Mammary epithelial cell (primary cell): ENCODE measurements at regions of chr9 and their contacts with region 1.

Region 1: GRCh38 chr9:15295761-15296405 is 11.1 kb downstream of the TTC39B start:
- DNase-seq: peak; percentile 56
- H3K4me3 ChIP-seq: peak overlapping the region; percentile 27 to 49 (median 42)
- H3K27ac ChIP-seq: peak overlapping the region; percentile 85
- H3K4me1 ChIP-seq: peaks cover 37% of the 10 kb centered on the region
- H3K27me3 ChIP-seq: no peaks in the 10 kb centered on the region
- CTCF ChIP-seq: no peak

Region 2: DNA sequence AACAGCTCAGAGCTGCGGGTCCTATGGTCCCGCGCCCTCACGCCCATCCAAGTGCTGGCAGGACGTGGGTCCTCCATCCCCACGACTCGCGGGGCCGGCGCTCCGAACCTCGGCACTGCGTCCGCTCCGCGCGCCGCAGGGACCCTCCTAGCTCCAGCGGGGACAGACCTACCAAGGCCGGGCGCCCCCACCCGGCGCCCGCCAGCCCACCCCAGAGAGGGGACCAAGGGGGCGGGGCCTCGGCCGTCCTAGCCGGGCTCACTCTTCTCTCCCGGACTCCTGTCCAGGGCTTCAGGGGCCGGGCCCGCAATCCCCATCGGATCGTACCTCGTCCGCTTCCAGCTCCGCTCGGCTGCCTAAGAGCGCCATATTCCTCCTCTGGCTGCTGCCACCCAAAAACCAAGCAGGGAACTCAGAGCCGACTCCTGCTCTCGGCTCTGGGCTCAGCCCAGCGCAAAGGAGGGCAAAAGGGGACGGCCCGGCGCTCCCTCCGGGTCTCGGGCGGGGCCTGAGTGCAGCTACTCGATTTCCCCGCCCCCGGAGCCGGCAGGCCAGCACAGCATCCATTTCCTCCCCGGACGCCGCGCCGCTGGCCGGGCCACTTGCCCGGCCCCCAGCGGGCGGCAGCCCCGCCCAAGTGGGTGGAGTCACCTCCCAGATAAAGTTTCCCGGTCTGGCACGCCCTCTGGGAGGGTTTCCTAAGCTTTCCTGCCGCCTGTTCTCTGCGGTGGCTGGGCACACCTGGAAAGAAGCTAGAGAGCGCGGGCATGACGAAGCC is 11.1 kb after region 1 on chr9 and contains the start of gene TTC39B:
- CTCF ChIA-PET with region 1: interaction called, 4 read pairs
- dilution Hi-C with region 1: no loop called
- in situ Hi-C with region 1: no loop called
- intact Hi-C with region 1: loop called (anchors 1 kb)
- DNase-seq: peak; percentile 94
- H3K4me3 ChIP-seq: peak within 1 kb of the TSS; percentile 44 to 85 (median 83)
- H3K27ac ChIP-seq: peak within 1 kb of the TSS; percentile 60
- H3K4me1 ChIP-seq: peaks cover 27% of the 10 kb centered on the region
- H3K27me3 ChIP-seq: no peaks in the 10 kb centered on the region
- CTCF ChIP-seq: no peak
- total RNA-seq, gene TTC39B: 25.5 to 26.0 TPM